Gastrocnemius medialis (tissue), 4 donors: ENCODE measurements at regions of chr10 and their contacts with region 1.

Region 1: DNA sequence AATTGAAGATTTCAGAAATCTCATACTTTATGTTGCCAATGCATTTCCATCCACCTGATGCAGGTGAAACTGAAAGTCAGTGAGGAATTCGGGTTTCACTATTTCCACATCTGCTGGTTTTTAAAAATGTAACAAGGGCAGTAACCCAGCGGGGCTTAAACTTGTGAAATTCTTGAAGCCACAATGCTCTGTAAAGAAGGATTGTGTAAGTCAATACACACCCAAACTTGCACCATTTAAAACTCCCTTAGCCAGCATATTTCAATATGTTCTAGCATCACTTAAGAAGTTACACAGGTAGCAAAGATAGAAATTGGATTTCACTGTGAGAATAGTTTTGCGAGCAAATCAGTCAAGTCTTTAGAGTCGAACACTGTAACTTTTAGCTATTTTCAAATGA is 386.1 kb downstream of the PLXDC2 start:
- DNase-seq: no peak
- ATAC-seq: no peak
- H3K4me3 ChIP-seq: no peak overlapping the region
- H3K27ac ChIP-seq: no peak overlapping the region
- H3K4me1 ChIP-seq: no peaks in the 10 kb centered on the region
- H3K27me3 ChIP-seq: no peaks in the 10 kb centered on the region
- CTCF ChIP-seq: no peak
- POLR2A ChIP-seq: no peak

Region 2: DNA sequence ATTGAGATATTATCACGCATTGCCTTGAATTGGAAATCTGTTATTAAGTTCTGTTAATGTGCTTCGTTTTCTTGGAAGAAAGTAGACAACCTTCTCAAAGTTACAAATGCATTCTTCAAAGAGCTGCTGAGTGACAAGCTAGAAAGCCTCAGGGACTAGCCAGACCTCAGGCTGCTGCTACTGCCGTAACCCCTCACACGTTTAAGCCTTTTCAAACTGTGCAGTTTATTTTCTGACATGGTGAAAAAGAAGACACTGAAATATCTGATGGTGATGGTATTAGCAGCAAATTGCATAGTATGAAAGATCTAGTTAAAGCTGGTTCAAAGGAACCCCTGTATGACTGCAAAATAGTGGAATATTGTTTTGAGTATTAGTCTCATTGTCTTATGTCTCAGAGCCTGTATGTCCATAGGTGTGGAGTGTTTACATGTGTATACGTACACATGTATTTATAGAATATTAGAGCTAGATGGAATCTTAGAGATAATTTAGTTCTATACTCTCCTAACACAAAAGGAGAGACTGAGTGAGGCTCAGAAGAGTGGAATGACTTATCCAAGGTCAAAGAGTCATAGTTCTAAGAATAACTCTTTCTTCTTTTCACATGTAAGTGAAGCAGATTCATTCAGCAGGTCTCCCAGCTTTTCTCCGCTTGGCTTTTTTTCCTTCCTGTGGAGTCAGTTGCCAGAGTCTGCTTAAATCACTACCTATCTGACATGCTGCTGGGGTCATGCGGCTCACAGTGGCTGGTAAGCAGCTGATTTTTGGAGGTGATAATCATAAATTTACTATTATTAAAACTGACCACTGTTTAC is 45.8 kb after region 1 on chr10:
- in situ Hi-C with region 1: no loop called
- intact Hi-C with region 1: loop called (anchors 1 kb)
- DNase-seq: no peak
- ATAC-seq: no peak
- H3K4me3 ChIP-seq: no peak overlapping the region
- H3K27ac ChIP-seq: no peak overlapping the region
- H3K4me1 ChIP-seq: no peaks in the 10 kb centered on the region
- H3K27me3 ChIP-seq: no peaks in the 10 kb centered on the region
- CTCF ChIP-seq: no peak
- POLR2A ChIP-seq: no peak